ENCODE measurements at regions of chr3 and their contacts with region 1.

Region 1: GRCh38 chr3:150408221-150409102 is at the start of gene TSC22D2:
- DNase-seq: peak; percentile 94 to 97
- H3K4me3 ChIP-seq: peak within 1 kb of the TSS; percentile 99
- H3K4me3 Mint-ChIP-seq: peak within 1 kb of the TSS; percentile 97
- H3K27ac Mint-ChIP-seq: peak within 1 kb of the TSS; percentile 99
- H3K4me1 ChIP-seq: peaks cover 8% of the 10 kb centered on the region
- H3K4me1 Mint-ChIP-seq: peaks cover 6% of the 10 kb centered on the region
- H3K27me3 ChIP-seq: no peaks in the 10 kb centered on the region
- H3K27me3 Mint-ChIP-seq: no peaks in the 10 kb centered on the region
- CTCF ChIP-seq: no peak
- total RNA-seq, gene TSC22D2: 30.8 and 33.6 TPM in 2 replicates

Region 2: GRCh38 chr3:150238998-150239619 is 169.4 kb before region 1 on chr3:
- CTCF ChIA-PET with region 1: interaction called, 6 read pairs
- POLR2A ChIA-PET with region 1: interaction called, 4 read pairs
- intact Hi-C with region 1: loop called (anchors 5 kb)
- DNase-seq: peak; percentile 54 to 64
- H3K4me3 ChIP-seq: no peak overlapping the region
- H3K4me3 Mint-ChIP-seq: no peak overlapping the region
- H3K27ac Mint-ChIP-seq: no peak overlapping the region
- H3K4me1 ChIP-seq: peaks cover 28% of the 10 kb centered on the region
- H3K4me1 Mint-ChIP-seq: peaks cover 26% of the 10 kb centered on the region
- H3K27me3 ChIP-seq: no peaks in the 10 kb centered on the region
- H3K27me3 Mint-ChIP-seq: no peaks in the 10 kb centered on the region
- CTCF ChIP-seq: peak; percentile 65 to 86

Region 3: DNA sequence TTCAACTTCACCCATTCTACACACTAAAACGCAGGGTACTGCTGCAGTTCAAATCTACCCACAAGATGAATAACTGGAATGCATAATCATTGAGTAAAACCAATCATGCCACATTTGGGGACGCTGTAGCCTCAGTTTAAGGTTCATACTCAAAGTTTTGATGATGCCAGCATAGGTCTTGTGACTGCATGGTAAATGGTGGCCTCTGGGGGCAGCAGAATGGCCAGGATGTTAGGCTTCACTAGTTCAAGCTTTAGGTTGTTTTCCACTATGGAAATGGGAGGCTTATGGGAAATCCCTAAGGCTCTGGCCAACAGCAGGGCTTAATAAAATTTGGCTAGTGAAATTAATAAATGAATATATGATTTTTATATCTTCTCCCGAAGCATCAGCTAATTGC is 104.7 kb before region 1 on chr3:
- CTCF ChIA-PET with region 1: no interaction called
- POLR2A ChIA-PET with region 1: no interaction called
- intact Hi-C with region 1: loop called (anchors 5 kb)
- DNase-seq: peak; percentile 45
- H3K4me3 ChIP-seq: no peak overlapping the region
- H3K4me3 Mint-ChIP-seq: no peak overlapping the region
- H3K27ac Mint-ChIP-seq: no peak overlapping the region
- H3K4me1 ChIP-seq: peaks cover 8% of the 10 kb centered on the region; the same call in 1 of the 2 replicates
- H3K4me1 Mint-ChIP-seq: peaks cover 16% of the 10 kb centered on the region
- H3K27me3 ChIP-seq: no peaks in the 10 kb centered on the region
- H3K27me3 Mint-ChIP-seq: no peaks in the 10 kb centered on the region
- CTCF ChIP-seq: peak; percentile 40 to 50

Region 4: DNA sequence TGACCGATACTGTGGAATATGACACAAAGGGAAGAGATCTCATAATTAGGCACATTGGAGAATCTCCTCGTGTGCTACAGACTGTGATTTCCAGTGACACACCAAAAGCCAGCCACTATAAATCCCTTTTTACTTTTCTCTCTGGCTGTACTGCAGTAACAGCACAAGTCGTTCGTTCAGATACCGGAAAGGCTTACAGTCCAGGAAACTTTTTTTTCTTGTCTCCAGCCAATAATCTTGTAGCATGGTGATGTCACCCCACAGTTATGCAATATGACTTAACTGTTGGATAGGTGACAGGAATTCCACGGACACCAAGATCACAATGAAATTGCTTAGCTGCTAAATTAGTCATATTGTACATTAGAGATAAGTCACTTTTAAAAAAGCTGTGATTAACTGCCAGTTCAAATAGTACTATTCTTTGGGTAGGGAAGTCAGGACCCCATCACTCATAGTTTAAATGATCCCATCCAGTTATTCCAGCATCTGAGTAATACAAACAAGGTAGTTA is 36.7 kb before region 1 on chr3:
- CTCF ChIA-PET with region 1: no interaction called
- POLR2A ChIA-PET with region 1: interaction called, 3 read pairs
- intact Hi-C with region 1: loop called (anchors 1 kb)
- DNase-seq: peak; percentile 72 to 78
- H3K4me3 ChIP-seq: peak overlapping the region; percentile 43
- H3K4me3 Mint-ChIP-seq: peak overlapping the region; percentile 71
- H3K27ac Mint-ChIP-seq: peak overlapping the region; percentile 86
- H3K4me1 ChIP-seq: peaks cover 46% of the 10 kb centered on the region
- H3K4me1 Mint-ChIP-seq: peaks cover 23% of the 10 kb centered on the region
- H3K27me3 ChIP-seq: no peaks in the 10 kb centered on the region
- H3K27me3 Mint-ChIP-seq: no peaks in the 10 kb centered on the region
- CTCF ChIP-seq: no peak

Region 5: GRCh38 chr3:150469031-150469942 is 60.8 kb after region 1 on chr3:
- CTCF ChIA-PET with region 1: no interaction called
- POLR2A ChIA-PET with region 1: interaction called, 4 read pairs
- intact Hi-C with region 1: loop called (anchors 1 kb)
- DNase-seq: peak; percentile 43 to 53
- H3K4me3 ChIP-seq: no peak overlapping the region
- H3K4me3 Mint-ChIP-seq: peak overlapping the region; percentile 39
- H3K27ac Mint-ChIP-seq: peak overlapping the region; percentile 94
- H3K4me1 ChIP-seq: peaks cover 33% of the 10 kb centered on the region
- H3K4me1 Mint-ChIP-seq: peaks cover 25% of the 10 kb centered on the region
- H3K27me3 ChIP-seq: no peaks in the 10 kb centered on the region
- H3K27me3 Mint-ChIP-seq: no peaks in the 10 kb centered on the region
- CTCF ChIP-seq: no peak

Region 6: GRCh38 chr3:151903501-151903991 is 1495.1 kb after region 1 on chr3:
- CTCF ChIA-PET with region 1: no interaction called
- POLR2A ChIA-PET with region 1: no interaction called
- intact Hi-C with region 1: no loop called
- DNase-seq: no peak
- H3K4me3 ChIP-seq: no peak overlapping the region
- H3K4me3 Mint-ChIP-seq: no peak overlapping the region
- H3K27ac Mint-ChIP-seq: no peak overlapping the region
- H3K4me1 ChIP-seq: no peaks in the 10 kb centered on the region
- H3K4me1 Mint-ChIP-seq: peaks cover 7% of the 10 kb centered on the region
- H3K27me3 ChIP-seq: no peaks in the 10 kb centered on the region
- H3K27me3 Mint-ChIP-seq: no peaks in the 10 kb centered on the region
- CTCF ChIP-seq: no peak